Endothelial cell of umbilical vein (primary cell): ENCODE measurements at regions of chr5 and their contacts with region 1.

Region 1: DNA sequence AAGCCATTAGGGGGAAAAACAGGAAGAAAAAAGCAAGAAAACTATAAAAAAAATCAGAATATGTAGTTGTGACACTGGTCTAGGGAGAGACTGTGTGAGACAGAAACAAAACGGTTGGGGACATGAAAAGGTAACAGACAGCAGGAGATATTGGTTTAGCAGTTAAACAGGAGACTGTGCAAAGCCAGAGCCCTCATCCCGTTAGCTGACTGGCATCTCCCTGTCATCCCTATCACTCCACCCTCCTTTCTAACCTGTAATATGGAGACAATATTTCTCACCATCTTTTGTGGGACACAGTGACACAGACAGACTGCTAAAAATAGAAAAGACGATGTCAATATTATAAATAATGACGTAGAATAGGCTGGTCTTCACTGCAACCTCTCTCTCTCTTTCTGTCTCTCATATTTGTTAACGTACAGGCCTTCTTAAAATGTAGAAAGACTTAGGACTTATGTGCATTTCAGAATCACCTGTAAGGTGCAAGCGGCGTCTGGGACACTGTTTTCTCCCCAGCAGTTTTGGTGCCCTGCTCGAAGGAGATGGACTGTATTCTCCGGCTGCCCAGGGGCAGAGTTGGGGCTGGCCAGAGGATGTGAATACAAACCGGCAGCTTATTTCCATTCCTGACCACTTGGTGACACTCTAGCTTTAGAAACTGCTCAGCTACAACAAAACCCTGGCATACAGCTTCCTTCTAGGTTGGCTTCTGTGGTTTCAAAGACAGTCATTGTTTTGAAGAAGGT is 190.6 kb downstream of the MAT2B start:
- DNase-seq: peak; percentile 87
- H3K4me3 ChIP-seq: no peak overlapping the region
- H3K27ac ChIP-seq: peak overlapping the region; percentile 24
- H3K4me1 ChIP-seq: peaks cover 7% of the 10 kb centered on the region
- H3K27me3 ChIP-seq: no peaks in the 10 kb centered on the region
- CTCF ChIP-seq: peak; percentile 76 to 78
- POLR2A ChIP-seq: no peak

Region 2: DNA sequence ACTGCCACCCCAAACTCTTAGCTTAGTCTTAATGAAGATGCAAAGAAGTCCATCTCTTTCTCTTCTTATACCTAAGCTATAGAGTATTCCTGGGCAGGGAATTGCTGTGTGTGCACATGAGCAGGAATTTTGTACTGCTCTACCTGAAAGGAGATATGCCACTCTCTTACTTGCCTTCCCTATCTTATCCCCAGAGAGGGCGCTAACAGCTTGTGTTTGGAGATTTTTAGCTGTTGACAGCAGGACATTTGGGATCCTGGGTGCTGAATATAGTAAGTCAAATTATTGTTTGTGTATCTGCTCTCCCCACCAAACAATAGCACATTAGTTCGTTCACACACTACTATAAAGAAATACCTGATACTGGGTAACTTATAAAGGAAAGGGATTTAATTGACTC is 1468.9 kb before region 1 on chr5:
- CTCF ChIA-PET with region 1: no interaction called
- POLR2A ChIA-PET with region 1: no interaction called
- dilution Hi-C with region 1: no loop called
- intact Hi-C with region 1: no loop called
- DNase-seq: no peak
- H3K4me3 ChIP-seq: no peak overlapping the region
- H3K27ac ChIP-seq: no peak overlapping the region
- H3K4me1 ChIP-seq: no peaks in the 10 kb centered on the region
- H3K27me3 ChIP-seq: no peaks in the 10 kb centered on the region
- CTCF ChIP-seq: no peak
- POLR2A ChIP-seq: no peak

Region 3: DNA sequence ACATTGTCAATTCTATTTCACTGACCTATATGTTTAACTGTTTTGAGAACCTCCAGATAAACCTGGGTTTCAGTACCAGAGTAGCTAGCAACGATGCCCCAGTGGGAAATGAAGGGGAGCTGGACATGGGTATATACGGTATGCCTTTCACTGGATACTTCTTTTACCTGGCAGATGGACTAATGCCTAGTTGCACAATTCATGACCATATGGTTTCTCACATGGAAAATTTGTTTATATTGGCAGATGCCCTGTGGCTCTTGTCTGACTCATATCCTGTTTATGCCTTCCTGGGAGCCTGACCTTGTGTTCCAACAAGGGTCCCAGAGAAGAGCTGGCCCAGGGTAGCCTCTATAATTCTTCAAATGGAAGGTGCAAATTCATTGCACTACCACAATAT is 46.5 kb before region 1 on chr5:
- CTCF ChIA-PET with region 1: no interaction called
- POLR2A ChIA-PET with region 1: no interaction called
- dilution Hi-C with region 1: no loop called
- intact Hi-C with region 1: no loop called
- DNase-seq: peak; percentile 15
- H3K4me3 ChIP-seq: no peak overlapping the region
- H3K27ac ChIP-seq: no peak overlapping the region
- H3K4me1 ChIP-seq: peaks cover 4% of the 10 kb centered on the region
- H3K27me3 ChIP-seq: no peaks in the 10 kb centered on the region
- CTCF ChIP-seq: no peak
- POLR2A ChIP-seq: no peak

Region 4: DNA sequence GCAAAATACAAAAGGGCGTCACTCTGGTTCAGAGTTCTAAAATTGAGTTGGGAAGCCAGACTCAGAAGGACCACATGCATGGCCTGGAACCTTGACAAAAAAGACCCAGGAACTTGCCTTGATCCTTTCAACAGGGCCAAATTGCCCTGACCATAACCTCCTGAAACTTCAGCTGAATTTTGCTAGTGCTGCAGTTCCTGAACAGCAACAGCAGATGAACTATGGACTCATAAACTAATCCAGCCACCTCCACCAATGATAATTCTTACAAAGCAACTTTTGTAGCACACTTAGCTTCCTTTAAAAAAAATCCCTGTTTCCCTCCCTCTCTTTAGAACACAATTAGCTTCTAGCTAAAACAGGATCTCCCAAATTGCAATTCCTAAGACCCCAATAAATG is 34.6 kb before region 1 on chr5:
- CTCF ChIA-PET with region 1: no interaction called
- POLR2A ChIA-PET with region 1: no interaction called
- dilution Hi-C with region 1: no loop called
- intact Hi-C with region 1: no loop called
- DNase-seq: no peak
- H3K4me3 ChIP-seq: no peak overlapping the region
- H3K27ac ChIP-seq: no peak overlapping the region
- H3K4me1 ChIP-seq: no peaks in the 10 kb centered on the region
- H3K27me3 ChIP-seq: no peaks in the 10 kb centered on the region
- CTCF ChIP-seq: no peak
- POLR2A ChIP-seq: no peak

Region 5: DNA sequence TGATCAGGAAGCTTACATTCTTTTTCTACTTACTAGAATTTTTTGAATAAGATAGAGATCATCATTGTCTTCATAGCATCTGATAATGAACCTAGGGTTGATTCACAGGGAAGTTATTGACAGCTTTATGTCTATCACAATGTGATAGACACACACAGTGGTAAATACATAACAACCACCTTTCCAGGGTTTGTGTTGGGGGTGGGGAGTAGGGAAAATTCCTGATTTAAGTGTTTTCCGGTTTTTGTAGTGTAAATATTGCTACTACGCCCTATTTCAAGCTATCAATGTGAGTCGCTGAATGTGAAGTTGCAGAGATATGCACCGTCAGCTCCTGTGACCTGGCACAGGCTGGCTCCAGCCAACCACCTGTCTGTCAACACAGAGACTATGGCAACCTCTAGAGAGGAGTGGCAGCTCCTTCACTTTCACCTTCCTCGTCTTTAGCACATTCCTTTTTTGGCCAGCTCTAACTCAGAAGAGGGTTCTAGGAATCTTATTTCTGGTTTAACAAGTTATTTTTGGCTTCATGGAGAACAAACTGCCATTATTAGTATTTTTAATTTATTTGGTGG is 34.3 kb after region 1 on chr5:
- CTCF ChIA-PET with region 1: no interaction called
- POLR2A ChIA-PET with region 1: no interaction called
- dilution Hi-C with region 1: no loop called
- intact Hi-C with region 1: no loop called
- DNase-seq: no peak
- H3K4me3 ChIP-seq: no peak overlapping the region
- H3K27ac ChIP-seq: no peak overlapping the region
- H3K4me1 ChIP-seq: no peaks in the 10 kb centered on the region
- H3K27me3 ChIP-seq: no peaks in the 10 kb centered on the region
- CTCF ChIP-seq: no peak
- POLR2A ChIP-seq: no peak

Region 6: GRCh38 chr5:163760498-163760897 is 64.5 kb after region 1 on chr5:
- CTCF ChIA-PET with region 1: interaction called, 15 read pairs
- POLR2A ChIA-PET with region 1: interaction called, 5 read pairs
- dilution Hi-C with region 1: no loop called
- intact Hi-C with region 1: loop called (anchors 2 kb)
- DNase-seq: peak; percentile 99
- H3K4me3 ChIP-seq: peak overlapping the region in 1 of 3 experiments; percentile 2
- H3K27ac ChIP-seq: peak overlapping the region; percentile 95
- H3K4me1 ChIP-seq: peaks cover 47% of the 10 kb centered on the region
- H3K27me3 ChIP-seq: no peaks in the 10 kb centered on the region
- CTCF ChIP-seq: no peak
- POLR2A ChIP-seq: peak; percentile 74

Region 7: GRCh38 chr5:163968651-163969050 is 272.6 kb after region 1 on chr5:
- CTCF ChIA-PET with region 1: interaction called, 3 read pairs
- POLR2A ChIA-PET with region 1: no interaction called
- dilution Hi-C with region 1: no loop called
- intact Hi-C with region 1: loop called (anchors 1 kb)
- DNase-seq: peak; percentile 14
- H3K4me3 ChIP-seq: no peak overlapping the region
- H3K27ac ChIP-seq: peak overlapping the region; percentile 35
- H3K4me1 ChIP-seq: peaks cover 8% of the 10 kb centered on the region
- H3K27me3 ChIP-seq: no peaks in the 10 kb centered on the region
- CTCF ChIP-seq: no peak
- POLR2A ChIP-seq: no peak

Region 8: DNA sequence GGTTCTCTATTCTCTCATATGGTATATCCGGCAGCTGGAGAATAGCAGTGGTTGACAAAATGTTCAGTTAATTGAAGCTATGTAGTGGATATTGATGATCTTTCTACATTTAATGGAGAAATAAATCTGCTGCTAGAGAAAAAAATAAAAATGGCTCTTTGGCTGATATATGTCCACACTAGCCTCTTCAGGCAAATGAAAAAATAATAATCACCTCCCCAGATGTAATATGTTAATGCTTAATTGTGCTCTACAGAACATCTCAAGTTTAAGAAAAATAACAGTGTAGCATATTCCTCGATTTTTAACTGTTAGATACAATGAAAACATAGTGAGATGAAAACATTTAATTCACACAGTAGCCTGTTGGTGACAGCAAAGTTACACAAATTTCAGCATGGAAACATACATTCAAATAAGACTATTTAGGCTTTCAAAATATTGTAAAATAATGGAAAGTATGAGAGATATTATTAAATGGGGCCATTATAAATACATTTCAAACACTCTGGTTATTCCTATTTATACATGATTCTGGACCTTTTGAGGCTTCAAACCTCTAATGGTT is 352.4 kb after region 1 on chr5:
- CTCF ChIA-PET with region 1: interaction called, 6 read pairs
- POLR2A ChIA-PET with region 1: no interaction called
- dilution Hi-C with region 1: no loop called
- intact Hi-C with region 1: loop called (anchors 1 kb)
- DNase-seq: peak; percentile 50
- H3K4me3 ChIP-seq: no peak overlapping the region
- H3K27ac ChIP-seq: no peak overlapping the region
- H3K4me1 ChIP-seq: no peaks in the 10 kb centered on the region
- H3K27me3 ChIP-seq: no peaks in the 10 kb centered on the region
- CTCF ChIP-seq: no peak
- POLR2A ChIP-seq: no peak

Region 9: GRCh38 chr5:164422400-164422799 is 726.4 kb after region 1 on chr5:
- CTCF ChIA-PET with region 1: interaction called, 4 read pairs
- POLR2A ChIA-PET with region 1: no interaction called
- dilution Hi-C with region 1: no loop called
- intact Hi-C with region 1: loop called (anchors 1 kb)
- DNase-seq: peak; percentile 43
- H3K4me3 ChIP-seq: no peak overlapping the region
- H3K27ac ChIP-seq: no peak overlapping the region
- H3K4me1 ChIP-seq: no peaks in the 10 kb centered on the region
- H3K27me3 ChIP-seq: no peaks in the 10 kb centered on the region
- CTCF ChIP-seq: peak in 1 of 2 donors; percentile 36
- POLR2A ChIP-seq: no peak

Region 10: DNA sequence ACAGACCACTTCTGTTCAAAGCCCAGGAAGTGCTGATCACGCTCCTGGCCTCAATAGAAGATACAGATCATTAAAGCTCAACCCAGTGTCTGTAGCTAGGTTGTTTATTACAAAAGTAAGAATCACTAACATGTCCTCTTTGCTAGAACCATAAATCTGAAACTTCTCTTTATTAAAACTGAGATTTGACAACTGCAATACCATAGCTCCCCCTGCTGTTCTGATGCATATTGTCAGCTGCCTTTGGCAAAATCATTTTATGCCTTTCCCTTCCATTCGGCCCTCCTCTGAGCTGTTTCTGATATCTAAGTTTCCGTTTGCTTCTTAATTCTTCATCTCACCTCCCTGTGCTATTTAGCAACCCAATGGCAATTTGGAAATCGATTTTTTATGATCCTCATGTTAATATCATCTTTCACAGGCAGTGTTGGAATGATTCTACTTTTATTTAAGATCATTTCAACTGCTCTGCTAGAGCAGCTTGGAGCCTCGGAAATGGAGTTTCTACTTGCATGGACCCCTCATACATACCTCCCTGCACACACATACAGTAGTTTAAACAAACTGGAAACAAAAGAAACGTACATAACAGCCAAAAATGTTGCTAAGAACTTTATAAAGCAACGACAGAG is 808.3 kb after region 1 on chr5:
- CTCF ChIA-PET with region 1: interaction called, 113 read pairs
- POLR2A ChIA-PET with region 1: interaction called, 3 read pairs
- dilution Hi-C with region 1: no loop called
- intact Hi-C with region 1: loop called (anchors 1 kb)
- DNase-seq: peak; percentile 71
- H3K4me3 ChIP-seq: no peak overlapping the region
- H3K27ac ChIP-seq: no peak overlapping the region
- H3K4me1 ChIP-seq: peaks cover 2% of the 10 kb centered on the region
- H3K27me3 ChIP-seq: no peaks in the 10 kb centered on the region
- CTCF ChIP-seq: peak; percentile 65 to 68
- POLR2A ChIP-seq: no peak